Aorta (tissue), 5 donors: ENCODE measurements at regions of chr20 and their contacts with region 1.

Region 1: GRCh38 chr20:19497064-19497463 is 261.0 kb upstream of the RIN2 start:
- DNase-seq: no peak
- ATAC-seq: peak; percentile 49
- H3K4me3 ChIP-seq: no peak overlapping the region
- H3K27ac ChIP-seq: peak overlapping the region; percentile 91 to 96
- H3K4me1 ChIP-seq: peaks cover 9% of the 10 kb centered on the region in 2 donors
- H3K27me3 ChIP-seq: no peaks in the 10 kb centered on the region

Region 2: DNA sequence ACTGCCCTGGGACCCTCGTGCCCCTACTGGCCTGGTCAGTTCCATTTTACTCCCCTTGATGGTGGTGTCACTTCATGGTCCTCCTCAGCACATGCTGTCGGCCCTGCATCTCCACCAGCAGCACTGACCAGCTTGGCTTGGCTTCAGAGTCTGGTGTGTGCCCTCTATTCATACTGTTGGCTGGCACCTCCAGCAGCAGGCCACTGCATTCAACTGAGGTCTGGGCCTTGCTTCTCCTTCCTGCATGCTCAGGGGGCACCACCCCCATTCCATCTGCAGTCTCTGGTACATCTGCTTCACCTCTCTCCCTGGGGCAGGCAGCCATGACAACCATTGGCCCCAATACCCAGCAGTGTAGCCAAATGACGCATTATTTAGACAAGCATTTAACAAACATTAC is 128.7 kb before region 1 on chr20:
- intact Hi-C with region 1: loop called in 1 of 2 experiments (anchors 10 kb)
- DNase-seq: no peak
- ATAC-seq: no peak
- H3K4me3 ChIP-seq: no peak overlapping the region
- H3K27ac ChIP-seq: no peak overlapping the region
- H3K4me1 ChIP-seq: peaks cover 2 to 7% of the 10 kb centered on the region in 2 donors
- H3K27me3 ChIP-seq: no peaks in the 10 kb centered on the region